ENCODE measurements at regions of chr20 and their contacts with region 1.

Region 1: DNA sequence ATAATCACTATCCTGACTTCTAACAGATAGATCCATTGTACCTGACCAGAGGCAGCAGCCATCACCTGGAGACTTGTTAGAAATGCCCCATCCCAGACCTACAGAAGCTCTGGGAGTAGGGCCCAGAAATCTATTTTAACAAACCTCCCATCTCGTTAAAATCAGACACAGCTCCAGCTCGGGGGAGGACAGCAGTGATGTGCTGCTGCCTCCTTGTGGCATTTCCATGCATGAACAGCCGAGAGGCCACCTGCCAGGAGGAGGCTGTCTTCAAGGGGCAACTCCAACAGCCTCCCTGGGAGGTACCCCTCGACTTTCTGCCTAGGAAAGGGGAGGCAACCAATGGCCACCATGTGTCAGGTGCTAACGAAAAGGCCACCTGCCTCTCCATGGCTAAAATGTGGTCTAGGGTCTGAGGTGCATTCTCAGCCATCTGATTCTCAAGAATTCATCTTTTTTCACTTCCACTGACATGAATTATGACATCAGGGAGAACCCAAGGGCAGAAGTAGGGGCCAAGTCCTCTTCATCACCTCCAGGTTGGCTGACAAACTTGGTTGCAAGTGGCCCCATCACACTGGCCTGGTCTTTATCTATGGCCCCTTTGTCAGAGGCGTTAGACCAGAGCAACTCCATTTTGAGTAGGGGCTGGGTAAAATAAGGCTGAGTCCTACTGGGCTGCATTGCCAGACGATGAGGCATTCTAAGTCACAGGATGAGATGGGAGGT is 12.2 kb upstream of the KCNK15 start:
- DNase-seq: peak; percentile 78
- H3K4me3 Mint-ChIP-seq: peak overlapping the region; percentile 24
- H3K27ac Mint-ChIP-seq: peak overlapping the region; percentile 74
- H3K4me1 Mint-ChIP-seq: peaks cover 54% of the 10 kb centered on the region
- H3K27me3 Mint-ChIP-seq: no peaks in the 10 kb centered on the region
- CTCF ChIP-seq: peak; percentile 90

Region 2: GRCh38 chr20:43893930-43894329 is 839.6 kb before region 1 on chr20:
- CTCF ChIA-PET with region 1: no interaction called
- POLR2A ChIA-PET with region 1: no interaction called
- intact Hi-C with region 1: no loop called
- DNase-seq: peak; percentile 49
- H3K4me3 Mint-ChIP-seq: no peak overlapping the region
- H3K27ac Mint-ChIP-seq: no peak overlapping the region
- H3K4me1 Mint-ChIP-seq: peaks cover 7% of the 10 kb centered on the region
- H3K27me3 Mint-ChIP-seq: no peaks in the 10 kb centered on the region
- CTCF ChIP-seq: no peak

Region 3: DNA sequence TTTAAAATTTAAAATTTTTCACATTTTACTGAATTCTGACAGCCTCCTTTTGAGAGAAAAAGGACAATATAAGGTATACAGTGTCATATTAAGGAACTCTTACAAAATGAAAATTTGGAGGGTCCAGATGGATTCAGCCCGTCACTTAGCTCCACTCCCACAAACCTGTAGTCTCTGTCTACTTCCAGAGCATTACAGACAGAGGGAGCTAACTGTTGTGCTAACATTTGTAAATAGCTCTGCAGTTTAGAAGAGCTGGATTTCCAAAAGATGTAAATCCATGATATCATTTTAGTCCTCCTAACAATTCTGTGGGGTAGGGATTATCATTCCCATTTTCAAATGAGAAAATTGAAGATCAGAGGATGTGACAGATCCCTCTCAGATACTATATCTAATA is 195.5 kb before region 1 on chr20:
- CTCF ChIA-PET with region 1: no interaction called
- POLR2A ChIA-PET with region 1: no interaction called
- intact Hi-C with region 1: no loop called
- DNase-seq: no peak
- H3K4me3 Mint-ChIP-seq: no peak overlapping the region
- H3K27ac Mint-ChIP-seq: no peak overlapping the region
- H3K4me1 Mint-ChIP-seq: peaks cover 5% of the 10 kb centered on the region
- H3K27me3 Mint-ChIP-seq: no peaks in the 10 kb centered on the region
- CTCF ChIP-seq: no peak

Region 4: DNA sequence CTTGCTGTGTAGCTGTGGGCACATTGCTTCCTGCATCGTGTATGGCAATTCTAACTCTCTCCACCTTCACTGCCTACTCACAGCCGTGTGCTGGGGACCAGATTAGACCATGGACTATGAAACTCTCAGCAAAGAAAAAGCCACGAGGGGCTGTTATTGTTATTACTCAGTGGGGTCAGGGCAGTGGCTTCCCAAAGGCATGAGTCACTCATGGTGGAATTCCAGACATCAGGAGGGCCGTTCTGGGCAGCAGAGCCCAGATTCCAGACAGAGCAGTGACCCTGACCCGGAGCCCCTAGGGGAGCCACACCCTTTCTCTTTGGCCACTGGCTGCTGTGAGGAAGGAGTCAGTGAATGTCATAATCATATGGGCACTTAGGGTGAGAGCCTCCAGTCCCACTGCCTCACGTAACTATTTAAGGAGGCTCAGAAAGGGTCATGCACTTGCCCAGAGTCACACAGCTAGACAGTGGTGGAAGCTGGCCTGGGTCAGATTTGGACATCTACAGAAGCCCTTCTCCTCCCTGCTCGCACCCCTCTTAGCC is 40.5 kb before region 1 on chr20:
- CTCF ChIA-PET with region 1: interaction called, 25 read pairs
- POLR2A ChIA-PET with region 1: interaction called, 113 read pairs
- intact Hi-C with region 1: loop called (anchors 1 kb)
- DNase-seq: peak; percentile 95
- H3K4me3 Mint-ChIP-seq: no peak overlapping the region
- H3K27ac Mint-ChIP-seq: peak overlapping the region; percentile 56
- H3K4me1 Mint-ChIP-seq: peaks cover 20% of the 10 kb centered on the region
- H3K27me3 Mint-ChIP-seq: no peaks in the 10 kb centered on the region
- CTCF ChIP-seq: no peak

Region 5: GRCh38 chr20:44714696-44715482 is 18.6 kb before region 1 on chr20 and contains the start of gene CCN5:
- CTCF ChIA-PET with region 1: interaction called, 36 read pairs
- POLR2A ChIA-PET with region 1: interaction called, 138 read pairs
- intact Hi-C with region 1: no loop called
- DNase-seq: peak; percentile 94
- H3K4me3 Mint-ChIP-seq: peak within 1 kb of the TSS; percentile 24
- H3K27ac Mint-ChIP-seq: peak within 1 kb of the TSS; percentile 73
- H3K4me1 Mint-ChIP-seq: peaks cover 34% of the 10 kb centered on the region
- H3K27me3 Mint-ChIP-seq: no peaks in the 10 kb centered on the region
- CTCF ChIP-seq: no peak
- total RNA-seq, gene CCN5: 0.93 and 1.4 TPM in 2 replicates

Region 6: GRCh38 chr20:44720617-44720993 is 12.9 kb before region 1 on chr20:
- CTCF ChIA-PET with region 1: interaction called, 36 read pairs
- POLR2A ChIA-PET with region 1: interaction called, 138 read pairs
- intact Hi-C with region 1: loop called (anchors 1 kb)
- DNase-seq: peak; percentile 81
- H3K4me3 Mint-ChIP-seq: peak overlapping the region; percentile 35
- H3K27ac Mint-ChIP-seq: peak overlapping the region; percentile 90
- H3K4me1 Mint-ChIP-seq: peaks cover 42% of the 10 kb centered on the region
- H3K27me3 Mint-ChIP-seq: no peaks in the 10 kb centered on the region
- CTCF ChIP-seq: no peak

Region 7: GRCh38 chr20:44747166-44748004 is 13.9 kb after region 1 on chr20:
- CTCF ChIA-PET with region 1: interaction called, 23 read pairs
- POLR2A ChIA-PET with region 1: interaction called, 7 read pairs
- intact Hi-C with region 1: no loop called
- DNase-seq: peak; percentile 98
- H3K4me3 Mint-ChIP-seq: peak overlapping the region; percentile 39
- H3K27ac Mint-ChIP-seq: peak overlapping the region; percentile 77
- H3K4me1 Mint-ChIP-seq: peaks cover 20% of the 10 kb centered on the region
- H3K27me3 Mint-ChIP-seq: peaks cover 47% of the 10 kb centered on the region
- CTCF ChIP-seq: peak; percentile 63

Region 8: GRCh38 chr20:44810391-44811149 is 77.1 kb after region 1 on chr20 and contains the start of gene RIMS4:
- CTCF ChIA-PET with region 1: no interaction called
- POLR2A ChIA-PET with region 1: no interaction called
- intact Hi-C with region 1: no loop called
- DNase-seq: no peak
- H3K4me3 Mint-ChIP-seq: no peak within 1 kb of the TSS
- H3K27ac Mint-ChIP-seq: no peak within 1 kb of the TSS
- H3K4me1 Mint-ChIP-seq: no peaks in the 10 kb centered on the region
- H3K27me3 Mint-ChIP-seq: peaks cover 66% of the 10 kb centered on the region
- CTCF ChIP-seq: no peak
- total RNA-seq, gene RIMS4: not detected in 2 replicates

Region 9: GRCh38 chr20:44848254-44849015 is 114.9 kb after region 1 on chr20:
- CTCF ChIA-PET with region 1: no interaction called
- POLR2A ChIA-PET with region 1: no interaction called
- intact Hi-C with region 1: no loop called
- DNase-seq: no peak
- H3K4me3 Mint-ChIP-seq: no peak overlapping the region
- H3K27ac Mint-ChIP-seq: no peak overlapping the region
- H3K4me1 Mint-ChIP-seq: no peaks in the 10 kb centered on the region
- H3K27me3 Mint-ChIP-seq: peaks cover 47% of the 10 kb centered on the region
- CTCF ChIP-seq: no peak

Region 10: DNA sequence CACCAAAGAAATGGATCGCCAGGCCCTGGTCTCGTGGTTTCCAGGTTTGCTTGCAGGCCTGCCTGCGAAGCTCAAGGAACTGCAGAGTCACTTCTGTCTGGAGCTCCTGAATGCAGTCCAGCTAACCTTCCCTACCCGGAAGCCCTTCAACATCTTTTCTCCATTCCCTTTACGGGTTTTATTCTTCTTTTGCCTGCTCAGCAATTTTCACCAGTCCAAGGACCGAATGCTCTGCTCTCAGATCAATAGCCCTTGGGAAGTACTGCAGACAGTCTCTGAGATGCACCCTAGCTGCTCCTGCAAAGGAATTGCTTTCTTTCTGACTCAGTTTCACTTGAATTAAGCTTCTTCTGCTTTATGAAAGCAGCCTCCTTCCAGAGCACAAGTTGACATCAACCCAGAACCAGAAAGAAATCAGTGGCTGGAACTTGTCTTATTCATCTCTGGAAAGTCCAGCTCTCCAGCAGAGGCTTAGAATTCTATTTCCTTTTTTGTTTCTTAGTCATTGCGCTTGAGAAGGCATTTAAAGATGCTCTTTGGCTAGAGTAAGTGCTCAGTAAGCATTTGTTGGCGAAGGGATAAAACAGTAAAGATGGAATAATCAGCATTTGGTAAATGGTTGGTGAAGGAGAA is 133.3 kb after region 1 on chr20:
- CTCF ChIA-PET with region 1: interaction called, 6 read pairs
- POLR2A ChIA-PET with region 1: no interaction called
- intact Hi-C with region 1: loop called (anchors 5 kb)
- DNase-seq: no peak
- H3K4me3 Mint-ChIP-seq: no peak overlapping the region
- H3K27ac Mint-ChIP-seq: no peak overlapping the region
- H3K4me1 Mint-ChIP-seq: peaks cover 11% of the 10 kb centered on the region
- H3K27me3 Mint-ChIP-seq: peaks cover 32% of the 10 kb centered on the region
- CTCF ChIP-seq: no peak

Measured in MCF 10A (cell line).